Heart left ventricle (tissue), 16 donors: ENCODE measurements at regions of chr19 and their contacts with region 1.

Region 1: GRCh38 chr19:23758187-23759074 is at the start of gene ZNF681:
- DNase-seq: peak; percentile 88 to 94 (median 92)
- ATAC-seq: peak; percentile 95 to 97 (median 97)
- H3K4me3 ChIP-seq: peak within 1 kb of the TSS; percentile 48 to 94 (median 76)
- H3K27ac ChIP-seq: peak within 1 kb of the TSS in 11 of 12 donors; percentile 31 to 79 (median 65)
- H3K4me1 ChIP-seq: peaks cover 0 to 20% (median 3%) of the 10 kb centered on the region in 12 donors
- H3K27me3 ChIP-seq: no peaks in the 10 kb centered on the region
- CTCF ChIP-seq: peak in 3 of 12 donors; percentile 3 to 34 (median 33)
- POLR2A ChIP-seq: peak in 1 of 2 donors; percentile 53
- total RNA-seq, gene ZNF681: 0.28 to 1.6 (median 0.65) TPM

Region 2: DNA sequence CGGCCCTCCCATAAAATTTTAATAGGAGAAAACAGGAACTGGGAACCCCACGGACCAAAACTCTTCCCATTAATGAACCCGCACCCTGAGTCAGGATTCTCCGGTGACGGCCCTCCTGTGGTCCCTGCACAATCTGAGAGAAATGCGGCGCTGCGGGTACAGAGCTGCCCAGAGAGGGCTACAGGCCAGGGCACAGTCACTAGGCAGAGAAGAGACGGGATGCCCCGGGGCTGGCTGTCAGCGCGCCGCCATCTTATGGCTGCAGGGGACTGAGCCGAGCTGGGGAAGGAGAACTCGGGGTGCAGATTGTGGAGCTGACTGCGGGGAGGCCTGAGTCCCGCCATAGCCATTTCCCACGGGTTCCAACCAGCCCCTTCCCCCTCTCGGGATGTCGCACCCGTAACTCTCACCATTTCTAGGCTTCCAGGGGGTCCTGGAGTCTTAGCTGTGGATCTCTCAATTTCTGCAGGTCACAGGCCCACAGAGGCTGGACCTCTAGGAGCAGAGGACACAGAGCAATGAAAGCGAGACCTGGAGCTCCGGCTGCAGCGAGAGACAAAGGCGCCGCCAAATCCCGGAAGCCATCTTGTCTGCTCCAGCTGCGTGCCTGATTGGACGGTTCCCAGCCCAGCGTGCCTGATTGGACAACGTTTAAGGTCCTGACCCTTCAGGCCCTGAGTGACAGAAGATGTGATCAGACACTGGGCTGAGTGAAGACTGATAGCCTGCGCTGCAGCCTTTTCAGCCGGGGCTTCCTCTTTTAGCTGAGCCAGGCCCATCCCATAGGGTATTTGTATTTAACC is 71.6 kb before region 1 on chr19 and contains the start of gene ZNF675:
- intact Hi-C with region 1: loop called in 3 of 10 experiments (anchors 5 kb)
- DNase-seq: peak; percentile 93 to 97 (median 96)
- ATAC-seq: peak; percentile 96 to 98 (median 98)
- H3K4me3 ChIP-seq: peak within 1 kb of the TSS; percentile 48 to 99 (median 76)
- H3K27ac ChIP-seq: peak within 1 kb of the TSS; percentile 23 to 89 (median 84)
- H3K4me1 ChIP-seq: peaks cover 0 to 20% (median 9%) of the 10 kb centered on the region in 12 donors
- H3K27me3 ChIP-seq: no peaks in the 10 kb centered on the region
- CTCF ChIP-seq: peak in 1 of 12 donors; percentile 30
- POLR2A ChIP-seq: peak in 1 of 2 donors; percentile 17
- total RNA-seq, gene ZNF675: 2.1 to 6.4 (median 3.1) TPM